IMR-90 (cell line): ENCODE measurements at regions of chr11 and their contacts with region 1.

Region 1: GRCh38 chr11:26297189-26297975 is 34.5 kb upstream of the ANO3 start:
- DNase-seq: peak; percentile 75
- ATAC-seq: peak; percentile 90
- H3K4me3 ChIP-seq: no peak overlapping the region
- H3K27ac ChIP-seq: no peak overlapping the region
- H3K4me1 ChIP-seq: no peaks in the 10 kb centered on the region
- H3K27me3 ChIP-seq: peaks cover 9% of the 10 kb centered on the region
- CTCF ChIP-seq: peak; percentile 77
- POLR2A ChIP-seq: no peak
- RAD21 ChIP-seq: peak; percentile 63

Region 2: GRCh38 chr11:26106726-26107125 is 190.7 kb before region 1 on chr11:
- CTCF ChIA-PET with region 1: no interaction called
- POLR2A ChIA-PET with region 1: no interaction called
- dilution Hi-C with region 1: no loop called
- in situ Hi-C with region 1: no loop called
- intact Hi-C with region 1: no loop called
- DNase-seq: no peak
- ATAC-seq: no peak
- H3K4me3 ChIP-seq: no peak overlapping the region
- H3K27ac ChIP-seq: no peak overlapping the region
- H3K4me1 ChIP-seq: peaks cover 6% of the 10 kb centered on the region
- H3K27me3 ChIP-seq: no peaks in the 10 kb centered on the region
- CTCF ChIP-seq: no peak
- POLR2A ChIP-seq: no peak
- RAD21 ChIP-seq: no peak

Region 3: DNA sequence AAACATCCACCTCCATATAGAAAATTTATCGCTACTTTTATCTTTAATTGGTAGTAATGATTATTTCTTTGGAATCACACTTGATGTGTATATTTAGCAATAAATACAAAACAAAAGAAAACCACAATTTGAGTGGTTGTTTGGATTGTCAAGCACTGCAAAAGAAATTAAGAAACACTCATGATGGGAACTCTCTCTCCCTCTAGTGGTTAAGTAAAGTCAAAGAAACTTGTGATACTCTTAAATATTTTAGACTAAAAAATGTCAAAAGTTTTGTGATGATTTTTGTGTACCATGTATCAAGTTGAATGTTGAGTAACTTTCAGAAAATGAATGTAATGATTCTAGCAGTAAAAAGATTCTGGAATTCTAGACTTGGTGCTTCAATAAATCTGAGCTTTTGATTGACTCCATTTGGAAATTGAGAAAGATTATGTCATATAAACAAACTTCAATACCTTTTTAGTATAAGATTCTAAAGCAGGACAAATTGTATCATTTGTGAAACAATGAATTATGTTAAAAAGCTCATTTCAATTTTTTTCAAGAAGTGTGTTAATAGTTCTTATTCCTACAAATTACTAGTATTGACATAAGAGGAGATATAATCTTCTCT is 253.9 kb after region 1 on chr11:
- CTCF ChIA-PET with region 1: no interaction called
- POLR2A ChIA-PET with region 1: no interaction called
- dilution Hi-C with region 1: no loop called
- in situ Hi-C with region 1: no loop called
- intact Hi-C with region 1: loop called (anchors 1 kb)
- DNase-seq: peak; percentile 6
- ATAC-seq: no peak; the same call in 1 of the 2 replicates
- H3K4me3 ChIP-seq: no peak overlapping the region
- H3K27ac ChIP-seq: no peak overlapping the region
- H3K4me1 ChIP-seq: no peaks in the 10 kb centered on the region
- H3K27me3 ChIP-seq: no peaks in the 10 kb centered on the region
- CTCF ChIP-seq: peak; percentile 48
- POLR2A ChIP-seq: no peak
- RAD21 ChIP-seq: peak; percentile 25; the same call in 1 of the 2 replicates

Region 4: GRCh38 chr11:26649884-26650283 is 352.5 kb after region 1 on chr11:
- CTCF ChIA-PET with region 1: interaction called, 3 read pairs
- POLR2A ChIA-PET with region 1: no interaction called
- dilution Hi-C with region 1: no loop called
- in situ Hi-C with region 1: loop called (anchors 10 kb)
- intact Hi-C with region 1: loop called (anchors 1 kb)
- DNase-seq: peak; percentile 53
- ATAC-seq: peak; percentile 89
- H3K4me3 ChIP-seq: no peak overlapping the region
- H3K27ac ChIP-seq: no peak overlapping the region
- H3K4me1 ChIP-seq: no peaks in the 10 kb centered on the region
- H3K27me3 ChIP-seq: no peaks in the 10 kb centered on the region
- CTCF ChIP-seq: peak; percentile 67
- POLR2A ChIP-seq: no peak
- RAD21 ChIP-seq: peak; percentile 60